Activated T-helper 1 cell treated with anti-CD3 and anti-CD28 coated beads, Interleukin-12 subunit alpha, Interleukin-12 subunit beta, Interleukin-2, Interleukin-4 antibody, amounts not matched to agents 30 ng/mL and 10 ng/mL and 1 ng/mL, durations not matched to agents 14 hours and 24 hours and 36 hours (primary cell): ENCODE measurements at regions of chr7 and their contacts with region 1.

Region 1: GRCh38 chr7:155815332-155816191 is 3.3 kb upstream of the SHH start:
- DNase-seq: peak; percentile 66
- H3K4me3 Mint-ChIP-seq: no peak overlapping the region
- H3K27ac Mint-ChIP-seq: peak overlapping the region; percentile 67
- H3K4me1 Mint-ChIP-seq: peaks cover 21% of the 10 kb centered on the region
- H3K27me3 Mint-ChIP-seq: peaks cover 47% of the 10 kb centered on the region

Region 2: DNA sequence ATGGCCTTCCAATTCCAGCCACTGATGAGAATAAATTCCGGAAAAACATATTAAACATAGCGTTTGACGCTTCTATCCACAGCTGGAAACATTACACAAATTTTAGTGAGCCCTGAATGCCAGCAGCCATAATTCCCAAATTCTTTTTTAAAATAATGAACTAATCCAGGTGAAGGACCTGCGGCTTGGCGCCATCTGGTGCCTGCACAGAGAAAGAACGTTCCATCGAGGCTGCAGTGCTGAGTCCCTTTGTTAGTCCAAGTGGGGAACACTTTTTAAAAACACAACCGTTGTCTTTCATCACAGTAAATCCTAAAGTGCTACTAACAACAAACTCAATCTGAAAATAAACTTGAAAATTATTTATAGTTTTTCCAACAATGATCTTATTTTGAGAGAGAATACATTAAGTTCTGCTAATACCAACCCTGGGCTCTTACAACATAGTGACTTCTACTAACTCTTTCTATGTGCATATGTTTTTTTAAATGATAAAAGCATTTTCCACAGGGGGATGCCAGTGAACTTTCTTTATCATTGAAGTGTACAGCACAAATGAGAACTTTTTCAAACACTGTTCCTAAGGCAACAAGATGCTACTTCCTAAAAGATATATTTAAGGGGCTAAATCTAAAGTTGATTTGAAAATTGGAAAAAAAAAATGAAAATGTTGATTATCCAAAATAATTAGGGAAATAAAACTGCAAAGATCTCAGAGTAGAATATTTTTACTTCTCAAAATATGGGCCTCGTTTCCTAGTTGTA is 658.1 kb after region 1 on chr7:
- intact Hi-C with region 1: loop called (anchors 1 kb)
- DNase-seq: no peak
- H3K4me3 Mint-ChIP-seq: no peak overlapping the region
- H3K27ac Mint-ChIP-seq: no peak overlapping the region
- H3K4me1 Mint-ChIP-seq: no peaks in the 10 kb centered on the region
- H3K27me3 Mint-ChIP-seq: peaks cover 20% of the 10 kb centered on the region

Region 3: DNA sequence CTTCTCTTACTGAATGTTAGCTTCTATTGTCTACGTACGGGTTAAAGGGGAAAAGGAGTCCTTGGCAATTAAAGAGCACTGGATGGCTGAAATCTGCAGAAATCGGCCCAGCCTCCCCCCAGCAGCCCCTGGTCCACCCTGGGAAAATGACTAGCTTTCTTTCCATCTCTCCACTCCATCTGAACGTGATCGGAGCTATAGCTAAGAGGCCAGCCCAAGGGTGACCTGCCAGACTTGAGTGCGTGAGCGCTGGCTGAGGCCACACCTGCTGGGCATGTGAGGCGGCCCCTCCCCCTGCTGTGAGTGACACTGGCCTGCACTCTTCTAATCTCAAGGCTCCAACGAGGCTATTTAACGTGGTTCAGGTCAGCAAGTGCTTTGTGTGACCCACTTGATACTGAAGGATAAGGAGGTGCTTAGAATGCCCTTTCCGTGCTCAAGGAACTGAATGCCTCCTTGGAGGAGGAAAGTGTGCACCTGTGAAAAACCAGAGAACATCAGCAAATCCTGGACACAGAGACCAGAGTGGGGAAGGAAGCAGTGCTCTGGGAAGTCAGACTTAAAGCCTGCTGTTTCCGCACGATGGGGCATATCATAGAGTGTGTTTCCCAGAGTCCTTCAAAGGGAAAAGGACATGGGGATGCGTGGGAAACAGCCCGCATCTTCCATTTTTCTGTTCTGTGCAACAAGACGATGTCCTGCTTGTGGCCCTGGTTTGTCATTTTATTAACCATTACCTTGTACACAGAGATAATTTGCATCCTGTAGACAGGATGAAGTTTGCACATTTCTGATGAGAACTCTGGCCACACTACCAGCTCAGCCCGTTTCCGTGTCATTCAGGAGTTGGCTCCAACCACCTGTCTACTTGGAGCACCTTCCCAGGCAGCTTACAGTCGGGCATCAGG is 1207.4 kb after region 1 on chr7:
- intact Hi-C with region 1: loop called (anchors 5 kb)
- DNase-seq: no peak
- H3K4me3 Mint-ChIP-seq: no peak overlapping the region
- H3K27ac Mint-ChIP-seq: no peak overlapping the region
- H3K4me1 Mint-ChIP-seq: no peaks in the 10 kb centered on the region
- H3K27me3 Mint-ChIP-seq: peaks cover 70% of the 10 kb centered on the region